Left cardiac atrium (tissue), 4 donors: ENCODE measurements at regions of chr3 and their contacts with region 1.

Region 1: DNA sequence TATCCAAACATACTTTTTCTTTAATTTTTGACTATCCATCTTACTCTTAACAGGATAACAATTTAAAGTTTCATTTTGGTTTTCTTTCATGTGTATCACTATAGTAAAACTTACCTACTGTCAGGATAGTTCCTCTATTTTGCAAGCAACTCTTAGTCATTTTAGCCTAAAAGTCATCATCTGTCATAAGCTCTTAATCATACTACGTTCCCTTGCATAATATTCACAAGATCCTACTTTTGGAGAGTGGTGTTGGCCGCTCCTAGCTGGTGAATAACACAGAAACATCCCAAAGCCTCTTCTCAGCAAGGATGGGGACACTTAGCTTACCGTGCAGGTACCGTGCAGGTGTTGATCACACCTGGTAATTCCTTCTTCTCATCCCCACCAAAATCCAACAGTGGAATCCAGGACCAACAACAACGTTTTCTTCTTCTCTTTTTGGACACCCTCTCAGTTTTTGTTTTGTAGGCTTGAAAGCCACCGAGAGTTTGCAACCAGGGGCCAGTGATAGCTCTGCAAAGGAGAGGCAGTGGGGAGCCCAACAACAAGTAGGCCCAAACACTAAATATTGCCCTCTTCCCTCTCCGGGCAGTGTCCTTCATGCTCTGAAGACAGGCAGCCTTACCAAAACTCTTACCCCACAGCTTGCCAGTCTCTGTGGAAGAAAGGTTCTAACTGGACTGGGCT is 433 bp downstream of the FILIP1L start:
- DNase-seq: no peak
- ATAC-seq: peak; percentile 23 to 35

Region 2: DNA sequence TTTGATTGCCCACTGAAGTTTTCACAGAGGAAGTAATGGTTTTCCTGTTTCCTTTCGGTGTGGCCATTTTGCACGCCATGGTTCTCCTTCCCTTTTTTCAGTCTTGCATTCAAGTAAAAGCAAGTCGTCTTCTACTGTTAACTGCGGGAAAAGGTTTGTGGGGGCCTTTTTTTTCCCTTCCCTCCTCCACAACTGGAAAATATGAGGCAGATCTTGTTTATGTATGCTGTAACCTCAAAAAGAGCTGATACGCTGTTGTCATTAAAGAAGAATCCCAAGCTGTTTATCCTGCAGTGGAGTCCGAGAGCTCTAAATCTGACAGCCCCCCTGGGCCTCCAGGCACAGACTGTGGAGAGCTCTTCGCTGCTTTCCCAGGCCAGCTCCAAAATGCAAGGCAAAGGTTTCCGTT is 40.0 kb before region 1 on chr3:
- intact Hi-C with region 1: loop called in 1 of 2 experiments (anchors 5 kb)
- DNase-seq: no peak
- ATAC-seq: peak; percentile 62 to 63

Region 3: GRCh38 chr3:100169201-100169920 is 55.5 kb after region 1 on chr3:
- intact Hi-C with region 1: no loop called
- DNase-seq: peak; percentile 43
- ATAC-seq: no peak

Region 4: DNA sequence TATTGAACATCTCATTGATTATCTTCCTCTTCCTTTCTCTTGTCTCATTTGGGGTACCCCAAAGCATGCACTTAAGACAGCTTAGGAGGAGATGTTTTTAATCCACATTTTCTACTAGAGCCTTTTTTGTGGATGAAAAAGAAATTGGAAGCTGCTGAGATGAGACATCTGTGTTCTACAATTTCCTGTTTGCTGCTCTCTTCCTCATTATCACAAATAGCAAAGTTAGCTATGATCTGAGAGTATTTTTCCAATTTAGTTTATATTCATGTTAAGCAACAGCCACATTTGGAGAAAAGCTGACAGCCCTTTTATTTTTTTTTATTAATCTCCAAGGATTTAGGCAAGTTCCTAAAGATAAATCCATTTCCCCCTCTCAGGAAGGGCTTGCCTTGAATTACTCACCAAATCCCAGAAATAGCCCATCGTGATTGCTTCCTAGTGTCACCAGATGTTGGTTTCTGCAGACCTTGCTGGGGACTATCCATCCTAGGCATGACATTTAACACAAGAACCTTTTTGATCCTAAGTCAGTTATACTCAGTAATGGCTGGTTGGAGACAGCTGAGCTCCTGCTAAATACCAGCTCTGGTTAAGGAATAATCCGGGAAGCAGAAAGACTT is 71.2 kb after region 1 on chr3:
- intact Hi-C with region 1: no loop called
- DNase-seq: no peak
- ATAC-seq: peak in 1 of 2 donors; percentile 58